ENCODE measurements at regions of chr1 and their contacts with region 1.

Region 1: GRCh38 chr1:27284425-27285273 is 37.3 kb upstream of the TMEM222 start:
- DNase-seq: peak; percentile 92
- ATAC-seq: peak; percentile 97
- H3K4me3 Mint-ChIP-seq: no peak overlapping the region
- H3K27ac Mint-ChIP-seq: no peak overlapping the region
- H3K4me1 Mint-ChIP-seq: peaks cover 4% of the 10 kb centered on the region
- H3K27me3 Mint-ChIP-seq: no peaks in the 10 kb centered on the region

Region 2: DNA sequence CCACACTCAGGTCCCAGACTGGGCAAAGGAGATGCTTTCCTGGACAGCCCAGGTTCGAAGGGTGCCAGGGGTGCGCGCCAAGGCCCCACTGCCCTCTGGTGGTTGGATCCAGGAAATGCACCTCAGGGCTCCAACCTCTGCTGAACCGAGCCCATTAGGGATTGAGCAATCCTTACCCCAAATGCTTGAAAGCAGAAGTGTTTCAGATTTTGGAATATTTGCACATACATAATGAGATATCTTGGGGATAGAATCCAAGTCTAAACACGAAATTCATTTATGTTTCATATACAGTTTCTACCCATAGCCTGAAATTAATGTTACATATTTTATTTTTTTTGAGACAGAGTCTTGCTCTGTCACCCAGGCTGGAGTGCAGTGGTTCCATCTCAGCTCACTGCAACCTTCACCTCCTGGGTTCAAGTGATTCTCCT is 187.1 kb before region 1 on chr1:
- CTCF ChIA-PET with region 1: interaction called, 121 read pairs
- DNase-seq: peak; percentile 85
- ATAC-seq: peak; percentile 87
- H3K4me3 Mint-ChIP-seq: no peak overlapping the region
- H3K27ac Mint-ChIP-seq: no peak overlapping the region
- H3K4me1 Mint-ChIP-seq: peaks cover 23% of the 10 kb centered on the region
- H3K27me3 Mint-ChIP-seq: no peaks in the 10 kb centered on the region

Region 3: DNA sequence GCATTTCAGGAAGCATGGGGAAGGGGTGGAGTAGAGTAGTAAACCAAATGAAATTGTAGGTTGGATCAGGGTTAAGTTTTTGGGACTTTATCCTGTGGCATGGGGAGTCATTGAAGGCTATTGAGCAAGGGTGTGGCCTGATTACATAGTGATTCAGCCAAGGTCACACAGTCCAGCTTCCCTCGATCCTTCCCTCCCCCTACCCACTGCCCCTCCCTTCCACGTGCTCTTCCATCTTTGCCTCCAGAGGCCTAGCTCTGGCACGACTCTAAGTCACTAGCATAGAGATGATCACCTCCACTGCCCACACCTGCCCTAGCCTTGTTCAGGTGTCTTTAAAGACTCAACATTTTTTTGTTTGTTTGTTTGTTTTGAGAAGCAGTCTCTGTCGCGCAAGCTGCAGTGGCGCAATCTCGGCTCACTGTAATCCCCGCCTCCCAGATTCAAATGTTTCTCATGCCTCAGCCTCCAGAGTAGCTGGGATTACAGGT is 92.6 kb before region 1 on chr1:
- CTCF ChIA-PET with region 1: interaction called, 21 read pairs
- DNase-seq: no peak
- ATAC-seq: no peak
- H3K4me3 Mint-ChIP-seq: no peak overlapping the region
- H3K27ac Mint-ChIP-seq: no peak overlapping the region
- H3K4me1 Mint-ChIP-seq: no peaks in the 10 kb centered on the region
- H3K27me3 Mint-ChIP-seq: peaks cover 2% of the 10 kb centered on the region

Region 4: DNA sequence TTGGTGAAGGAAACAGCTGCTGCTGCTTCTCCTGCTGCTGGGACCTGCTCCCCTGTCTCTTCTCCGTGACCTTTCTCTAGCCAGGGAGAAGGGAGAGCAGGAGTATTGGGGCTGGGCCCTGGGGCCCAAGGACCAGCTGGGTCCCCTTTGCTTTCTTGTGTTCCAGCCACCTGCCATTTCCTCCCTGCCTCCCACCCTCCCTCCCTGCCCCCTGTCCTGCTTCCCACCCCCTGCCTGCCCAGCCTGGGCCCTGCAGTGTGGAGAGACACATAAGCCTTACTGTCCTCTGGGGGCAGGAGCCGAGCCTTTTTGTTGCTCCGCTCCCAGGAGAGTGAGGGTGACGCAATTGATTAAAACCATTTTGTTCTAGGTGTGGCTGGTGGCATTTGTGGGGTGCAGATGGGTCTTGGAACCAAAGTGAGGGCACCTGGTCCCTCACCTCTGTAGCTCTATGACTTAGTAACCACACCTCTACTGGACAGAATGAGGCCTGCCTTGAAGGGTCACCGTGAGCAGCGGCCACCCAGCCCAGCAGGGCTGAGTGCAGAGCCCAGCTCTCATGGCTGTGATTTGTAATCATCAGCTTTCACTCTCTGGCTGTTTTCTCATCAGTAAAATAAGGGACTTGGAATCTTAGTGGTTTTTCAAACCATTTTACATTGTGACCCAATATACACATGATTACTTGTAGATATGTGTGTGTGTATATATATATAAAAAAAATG is 23.4 kb after region 1 on chr1:
- CTCF ChIA-PET with region 1: no interaction called
- DNase-seq: no peak
- ATAC-seq: no peak
- H3K4me3 Mint-ChIP-seq: no peak overlapping the region
- H3K27ac Mint-ChIP-seq: no peak overlapping the region
- H3K4me1 Mint-ChIP-seq: no peaks in the 10 kb centered on the region
- H3K27me3 Mint-ChIP-seq: no peaks in the 10 kb centered on the region